ENCODE measurements at regions of chr6 and their contacts with region 1.

Region 1: DNA sequence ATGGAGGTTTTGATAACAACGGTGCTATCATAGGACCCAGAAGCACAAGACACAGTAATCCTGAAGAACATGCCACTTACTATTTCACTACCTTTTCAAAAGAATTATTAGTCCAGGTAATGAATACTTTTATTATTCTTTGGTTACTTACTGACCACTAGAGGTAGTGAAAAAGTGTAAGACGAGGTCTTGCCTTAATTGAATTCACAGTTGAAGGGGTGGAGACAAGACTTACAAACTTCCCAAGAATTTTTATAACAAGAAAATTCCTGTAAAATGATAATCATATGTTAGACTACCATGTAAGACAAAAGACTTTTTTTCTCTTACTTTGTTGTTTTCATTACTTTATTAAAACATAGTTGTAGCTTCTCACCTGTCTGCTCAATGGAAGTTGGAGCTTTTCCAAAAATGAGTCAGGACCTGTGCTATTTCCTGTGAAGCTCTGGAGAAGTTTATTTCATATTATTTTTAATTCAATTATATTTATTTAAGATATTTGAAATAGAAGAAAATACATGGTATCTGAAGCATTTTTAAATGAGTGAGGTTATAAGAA is 52.4 kb downstream of the DOP1A start:
- DNase-seq: peak; percentile 52
- H3K4me3 Mint-ChIP-seq: no peak overlapping the region
- H3K27ac Mint-ChIP-seq: no peak overlapping the region
- H3K4me1 Mint-ChIP-seq: no peaks in the 10 kb centered on the region
- H3K27me3 Mint-ChIP-seq: no peaks in the 10 kb centered on the region
- CTCF ChIP-seq: no peak

Region 2: DNA sequence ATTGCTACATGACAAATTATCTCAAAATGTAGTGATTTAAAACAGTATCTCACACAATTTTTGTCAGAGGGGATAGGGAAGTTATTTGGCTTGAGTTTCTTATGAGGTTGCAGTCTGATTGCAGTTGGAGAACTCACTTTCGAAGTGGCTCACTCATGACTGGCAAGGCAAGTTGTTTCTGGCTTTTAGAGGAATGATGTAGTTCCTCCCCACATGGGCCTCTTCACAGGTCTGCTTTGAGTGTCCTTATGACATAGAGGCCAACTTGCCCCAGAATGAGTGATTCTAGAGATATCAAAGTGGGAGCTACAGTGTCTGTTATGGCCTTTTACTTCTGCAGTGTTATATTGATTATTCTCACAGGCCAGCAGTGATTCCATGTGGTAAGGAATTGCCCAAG is 46.2 kb before region 1 on chr6:
- CTCF ChIA-PET with region 1: interaction called, 96 read pairs
- POLR2A ChIA-PET with region 1: interaction called, 15 read pairs
- intact Hi-C with region 1: loop called (anchors 2 kb)
- DNase-seq: no peak
- H3K4me3 Mint-ChIP-seq: no peak overlapping the region
- H3K27ac Mint-ChIP-seq: no peak overlapping the region
- H3K4me1 Mint-ChIP-seq: peaks cover 10% of the 10 kb centered on the region
- H3K27me3 Mint-ChIP-seq: no peaks in the 10 kb centered on the region
- CTCF ChIP-seq: no peak

Measured in MCF 10A (cell line).